ENCODE measurements at regions of chr13 and their contacts with region 1.

Region 1: DNA sequence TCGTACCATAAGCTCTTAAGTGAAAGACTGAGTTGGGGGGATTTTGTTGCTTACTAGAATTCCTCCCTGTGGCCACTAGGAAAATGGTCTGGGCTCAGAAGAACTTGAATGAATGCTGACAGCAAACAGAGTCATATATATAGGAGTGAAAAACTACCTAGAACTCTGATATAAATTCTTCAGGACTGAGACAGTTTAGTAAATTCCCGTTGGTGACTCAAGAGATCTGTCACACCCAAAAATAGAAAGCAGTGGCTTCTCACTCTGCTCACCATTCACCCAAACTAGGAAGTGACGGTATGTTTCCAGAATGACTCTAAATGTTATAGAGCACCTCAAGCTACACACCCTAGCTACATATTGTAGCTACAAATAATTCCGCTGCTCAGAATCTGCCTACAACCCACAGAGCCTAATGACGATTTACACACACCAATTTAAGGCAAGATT is 116.2 kb downstream of the TBC1D4 start:
- DNase-seq: peak; percentile 92
- ATAC-seq: peak; percentile 90
- H3K4me3 ChIP-seq: peak overlapping the region; percentile 42
- H3K27ac ChIP-seq: peak overlapping the region; percentile 84
- H3K4me1 ChIP-seq: peaks cover 52% of the 10 kb centered on the region
- H3K27me3 ChIP-seq: no peaks in the 10 kb centered on the region
- CTCF ChIP-seq: 0 out of 2 replicates have a peak, but pooled peaks have one; percentile 26

Region 2: DNA sequence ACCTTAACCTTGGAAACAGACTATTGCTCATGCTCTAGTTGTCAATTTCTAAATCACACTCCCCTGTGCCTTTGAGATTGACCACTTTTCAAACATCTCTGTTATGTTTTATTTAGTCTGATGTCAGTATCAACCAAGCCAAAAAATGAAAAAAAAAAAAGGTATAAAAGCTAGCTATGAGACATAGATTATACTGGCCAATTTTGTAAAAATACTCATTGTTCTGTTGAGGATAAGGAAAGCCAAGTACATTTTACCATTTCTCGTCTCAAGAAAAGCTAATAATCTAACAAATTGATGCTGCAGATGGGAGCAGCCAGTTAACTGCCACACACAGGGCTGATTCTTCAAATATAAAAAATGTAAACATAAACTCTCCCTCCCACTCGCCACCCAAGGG is 658.9 kb before region 1 on chr13:
- CTCF ChIA-PET with region 1: no interaction called
- POLR2A ChIA-PET with region 1: no interaction called
- intact Hi-C with region 1: no loop called
- DNase-seq: no peak
- ATAC-seq: no peak
- H3K4me3 ChIP-seq: no peak overlapping the region
- H3K27ac ChIP-seq: no peak overlapping the region
- H3K4me1 ChIP-seq: no peaks in the 10 kb centered on the region
- H3K27me3 ChIP-seq: no peaks in the 10 kb centered on the region
- CTCF ChIP-seq: no peak

Region 3: DNA sequence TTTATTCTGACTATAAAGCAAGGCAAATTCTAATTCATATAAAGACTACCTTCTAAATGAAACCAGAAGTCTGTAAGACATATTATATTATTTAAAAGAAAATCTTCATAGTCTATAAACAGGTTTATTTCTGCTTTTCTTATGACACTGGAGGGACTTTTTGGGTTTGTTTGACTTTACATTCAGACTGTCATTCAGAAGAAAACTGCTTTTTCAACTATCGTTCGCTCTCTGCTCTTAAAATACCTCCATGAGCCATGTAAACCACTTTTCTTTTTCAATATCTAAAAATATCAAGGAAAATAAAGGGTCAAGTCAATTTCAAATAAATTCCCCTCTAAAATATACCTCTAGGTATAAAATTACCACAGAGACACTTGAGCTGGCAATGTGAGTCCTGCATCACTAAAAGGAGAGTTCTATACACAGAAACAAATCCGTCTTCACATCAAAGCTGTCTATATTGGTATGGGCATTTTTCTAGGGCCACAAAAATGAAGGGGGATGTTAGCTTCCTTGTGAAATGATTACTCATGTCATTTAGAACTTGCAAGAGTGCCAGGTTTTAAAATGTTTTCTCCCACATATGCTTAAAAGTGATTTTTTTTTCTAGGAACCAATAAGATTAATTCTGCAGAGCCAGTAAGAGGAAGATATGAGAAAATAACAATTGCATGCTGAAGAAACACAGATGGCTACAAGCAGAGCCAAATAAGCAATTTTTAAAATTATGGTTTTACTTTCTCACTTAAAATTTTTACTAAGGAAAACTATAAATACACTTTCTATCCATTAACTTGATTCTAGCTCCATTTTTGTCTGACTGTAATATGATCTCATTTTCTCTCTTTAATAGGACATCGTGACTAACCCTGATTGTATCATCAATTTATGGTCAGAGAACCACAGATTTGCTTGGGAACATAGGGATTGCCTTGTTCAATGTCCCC is 65.6 kb before region 1 on chr13:
- CTCF ChIA-PET with region 1: no interaction called
- POLR2A ChIA-PET with region 1: no interaction called
- intact Hi-C with region 1: loop called (anchors 2 kb)
- DNase-seq: peak; percentile 36
- ATAC-seq: peak; percentile 65
- H3K4me3 ChIP-seq: no peak overlapping the region
- H3K27ac ChIP-seq: peak overlapping the region; percentile 10; the same call in 1 of the 2 replicates
- H3K4me1 ChIP-seq: peaks cover 11% of the 10 kb centered on the region; the same call in 1 of the 2 replicates
- H3K27me3 ChIP-seq: no peaks in the 10 kb centered on the region
- CTCF ChIP-seq: no peak

Region 4: GRCh38 chr13:75416327-75417005 is 50.7 kb after region 1 on chr13:
- CTCF ChIA-PET with region 1: interaction called, 4 read pairs
- POLR2A ChIA-PET with region 1: no interaction called
- intact Hi-C with region 1: loop called (anchors 5 kb)
- DNase-seq: no peak
- ATAC-seq: peak; percentile 12; the same call in 1 of the 2 replicates
- H3K4me3 ChIP-seq: no peak overlapping the region; the same call in 1 of the 2 replicates
- H3K27ac ChIP-seq: peak overlapping the region; percentile 74
- H3K4me1 ChIP-seq: peaks cover 58% of the 10 kb centered on the region
- H3K27me3 ChIP-seq: no peaks in the 10 kb centered on the region
- CTCF ChIP-seq: no peak